ENCODE measurements at regions of chr16 and their contacts with region 1.

Region 1: GRCh38 chr16:30585400-30586189 is at the start of gene ZNF785:
- DNase-seq: peak; percentile 99
- ATAC-seq: peak; percentile 98
- H3K4me3 ChIP-seq: peak within 1 kb of the TSS; percentile 58
- H3K27ac ChIP-seq: peak within 1 kb of the TSS; percentile 82
- H3K4me1 ChIP-seq: peaks cover 3% of the 10 kb centered on the region; the same call in 1 of the 2 replicates
- H3K27me3 ChIP-seq: no peaks in the 10 kb centered on the region
- CTCF ChIP-seq: 0 out of 2 replicates have a peak, but pooled peaks have one; percentile 12
- POLR2A ChIP-seq: no peak; the same call in 1 of the 2 replicates
- RAD21 ChIP-seq: no peak
- total RNA-seq, gene ZNF785: 2.8 and 2.9 TPM in 2 replicates

Region 2: GRCh38 chr16:30557957-30558788 is 27.4 kb before region 1 on chr16 and contains the start of gene ZNF764:
- CTCF ChIA-PET with region 1: no interaction called
- POLR2A ChIA-PET with region 1: no interaction called
- dilution Hi-C with region 1: no loop called
- in situ Hi-C with region 1: no loop called
- intact Hi-C with region 1: loop called (anchors 1 kb)
- DNase-seq: peak; percentile 96
- ATAC-seq: peak; percentile 99
- H3K4me3 ChIP-seq: peak within 1 kb of the TSS; percentile 73
- H3K27ac ChIP-seq: peak within 1 kb of the TSS; percentile 82
- H3K4me1 ChIP-seq: no peaks in the 10 kb centered on the region
- H3K27me3 ChIP-seq: no peaks in the 10 kb centered on the region
- CTCF ChIP-seq: no peak
- POLR2A ChIP-seq: peak; percentile 40
- RAD21 ChIP-seq: no peak
- total RNA-seq, gene ZNF764: 2.2 and 2.5 TPM in 2 replicates

Measured in IMR-90 (cell line).